Posterior cingulate gyrus (tissue), 11 donors: ENCODE measurements at regions of chr19 and their contacts with region 1.

Region 1: GRCh38 chr19:3700221-3701032 is at the start of gene PIP5K1C:
- DNase-seq: peak; percentile 87 to 99 (median 90)

Region 2: GRCh38 chr19:3665681-3666544 is 34.5 kb before region 1 on chr19:
- intact Hi-C with region 1: loop called (anchors 2 kb)
- DNase-seq: peak; percentile 49 to 95 (median 78)

Region 3: GRCh38 chr19:3733549-3734309 is 33.3 kb after region 1 on chr19:
- intact Hi-C with region 1: no loop called
- DNase-seq: no peak

Region 4: GRCh38 chr19:4182084-4182810 is 481.8 kb after region 1 on chr19 and contains the starts of genes ANKRD24 and SIRT6:
- intact Hi-C with region 1: loop called (anchors 5 kb)
- DNase-seq: peak; percentile 94 to 100 (median 96)